Breast epithelium (tissue), 4 donors: ENCODE measurements at regions of chr5 and their contacts with region 1.

Region 1: GRCh38 chr5:56294354-56294753 is 61.2 kb upstream of the ANKRD55 start:
- DNase-seq: no peak
- H3K4me3 ChIP-seq: no peak overlapping the region
- H3K27ac ChIP-seq: no peak overlapping the region
- H3K4me1 ChIP-seq: peaks cover 0 to 4% of the 10 kb centered on the region in 2 donors
- H3K27me3 ChIP-seq: no peaks in the 10 kb centered on the region
- CTCF ChIP-seq: no peak
- POLR2A ChIP-seq: no peak

Region 2: GRCh38 chr5:55530669-55531068 is 763.7 kb before region 1 on chr5:
- intact Hi-C with region 1: no loop called
- DNase-seq: no peak
- H3K4me3 ChIP-seq: peak overlapping the region in 1 of 3 donors; percentile 29
- H3K27ac ChIP-seq: peak overlapping the region in 1 of 2 donors; percentile 68
- H3K4me1 ChIP-seq: no peaks in the 10 kb centered on the region
- H3K27me3 ChIP-seq: no peaks in the 10 kb centered on the region
- CTCF ChIP-seq: no peak
- POLR2A ChIP-seq: no peak

Region 3: GRCh38 chr5:56327809-56328208 is 33.5 kb after region 1 on chr5:
- intact Hi-C with region 1: loop called (anchors 1 kb)
- DNase-seq: no peak
- H3K4me3 ChIP-seq: no peak overlapping the region
- H3K27ac ChIP-seq: no peak overlapping the region
- H3K4me1 ChIP-seq: no peaks in the 10 kb centered on the region
- H3K27me3 ChIP-seq: no peaks in the 10 kb centered on the region
- CTCF ChIP-seq: no peak
- POLR2A ChIP-seq: no peak

Region 4: DNA sequence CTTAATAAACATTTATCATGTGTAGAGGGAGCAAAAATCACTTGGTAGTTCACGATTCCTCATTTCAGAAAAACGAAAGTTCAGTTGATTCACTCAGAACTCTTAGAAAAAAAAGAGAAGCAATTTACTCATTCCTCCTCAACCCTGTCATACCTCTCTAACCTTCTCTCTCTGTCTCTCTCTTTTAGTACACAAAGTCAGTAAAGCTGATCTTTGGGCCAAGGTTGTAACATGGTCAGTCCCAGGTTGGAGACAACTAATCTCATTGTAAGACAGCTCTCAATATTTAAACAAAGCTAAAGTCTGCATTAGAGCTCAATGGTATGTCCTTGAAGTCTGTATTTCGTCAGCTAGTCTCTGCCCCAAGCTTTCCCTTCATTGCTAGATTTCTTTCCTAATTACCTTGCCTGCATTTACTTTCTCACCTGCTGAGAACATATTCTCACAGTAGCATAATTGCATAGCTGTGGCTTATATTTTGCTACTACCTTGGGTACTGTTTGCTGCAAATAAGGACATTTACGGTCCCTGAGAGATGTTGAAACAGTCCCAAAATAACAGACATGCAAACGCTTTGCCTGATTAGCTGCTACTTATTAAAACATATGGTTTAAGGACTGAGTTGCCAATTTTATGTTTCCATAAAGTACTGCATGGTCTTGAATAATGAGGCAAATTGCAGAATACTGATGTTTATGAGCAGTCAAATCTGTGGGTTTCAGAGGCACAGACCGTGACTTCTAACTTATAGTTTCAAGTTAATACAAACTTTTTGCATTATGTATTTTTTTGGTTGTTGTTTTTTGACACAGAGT is 1017.8 kb after region 1 on chr5:
- intact Hi-C with region 1: no loop called
- DNase-seq: no peak
- H3K4me3 ChIP-seq: no peak overlapping the region
- H3K27ac ChIP-seq: no peak overlapping the region
- H3K4me1 ChIP-seq: no peaks in the 10 kb centered on the region
- H3K27me3 ChIP-seq: no peaks in the 10 kb centered on the region
- CTCF ChIP-seq: no peak
- POLR2A ChIP-seq: no peak

Region 5: DNA sequence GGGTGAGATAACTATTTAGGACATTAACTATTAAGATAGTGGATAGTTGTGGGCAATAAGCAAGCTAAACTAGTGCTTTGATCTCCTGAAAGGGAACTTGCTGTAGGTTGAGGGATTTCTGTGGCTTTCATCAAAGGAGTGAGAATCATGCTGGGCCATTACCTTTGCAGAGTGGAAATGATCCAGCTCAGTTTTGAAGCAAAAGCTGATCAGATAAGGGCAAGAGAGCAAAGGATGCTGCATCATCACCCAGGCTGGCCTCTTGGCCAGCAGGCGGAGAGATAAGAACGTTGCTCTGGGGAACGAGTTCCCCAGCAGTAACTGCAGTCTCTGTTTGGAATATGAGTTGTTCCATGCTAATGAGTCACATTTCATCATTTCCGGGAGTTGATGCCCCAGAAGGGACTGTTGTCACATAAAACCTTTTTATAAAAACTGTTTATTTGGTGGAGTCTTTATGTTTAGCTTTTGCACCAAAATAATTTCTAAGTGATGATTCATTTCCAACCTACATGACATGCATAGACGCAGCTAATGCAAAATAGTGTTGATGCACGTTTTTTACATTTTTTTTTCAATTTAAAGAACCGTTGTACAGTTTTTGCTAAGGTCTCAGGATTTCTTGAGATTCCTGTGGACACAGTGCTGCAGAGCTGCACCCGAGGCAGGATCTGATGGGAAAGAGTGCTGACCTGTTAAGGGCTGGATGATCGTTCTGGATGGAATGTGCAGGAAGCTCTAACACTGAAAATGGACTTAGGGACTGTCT is 1088.9 kb after region 1 on chr5:
- intact Hi-C with region 1: no loop called
- DNase-seq: no peak
- H3K4me3 ChIP-seq: no peak overlapping the region
- H3K27ac ChIP-seq: no peak overlapping the region
- H3K4me1 ChIP-seq: no peaks in the 10 kb centered on the region
- H3K27me3 ChIP-seq: no peaks in the 10 kb centered on the region
- CTCF ChIP-seq: no peak
- POLR2A ChIP-seq: no peak